Aorta (tissue), 5 donors: ENCODE measurements at regions of chr10 and their contacts with region 1.

Region 1: GRCh38 chr10:14500172-14500765 is 169.5 kb upstream of the FRMD4A start:
- DNase-seq: no peak
- ATAC-seq: no peak
- H3K4me3 ChIP-seq: no peak overlapping the region
- H3K27ac ChIP-seq: no peak overlapping the region
- H3K4me1 ChIP-seq: no peaks in the 10 kb centered on the region
- H3K27me3 ChIP-seq: no peaks in the 10 kb centered on the region

Region 2: GRCh38 chr10:14200698-14201544 is 299.3 kb before region 1 on chr10:
- intact Hi-C with region 1: no loop called
- DNase-seq: no peak
- ATAC-seq: no peak
- H3K4me3 ChIP-seq: no peak overlapping the region
- H3K27ac ChIP-seq: no peak overlapping the region
- H3K4me1 ChIP-seq: no peaks in the 10 kb centered on the region
- H3K27me3 ChIP-seq: no peaks in the 10 kb centered on the region

Region 3: DNA sequence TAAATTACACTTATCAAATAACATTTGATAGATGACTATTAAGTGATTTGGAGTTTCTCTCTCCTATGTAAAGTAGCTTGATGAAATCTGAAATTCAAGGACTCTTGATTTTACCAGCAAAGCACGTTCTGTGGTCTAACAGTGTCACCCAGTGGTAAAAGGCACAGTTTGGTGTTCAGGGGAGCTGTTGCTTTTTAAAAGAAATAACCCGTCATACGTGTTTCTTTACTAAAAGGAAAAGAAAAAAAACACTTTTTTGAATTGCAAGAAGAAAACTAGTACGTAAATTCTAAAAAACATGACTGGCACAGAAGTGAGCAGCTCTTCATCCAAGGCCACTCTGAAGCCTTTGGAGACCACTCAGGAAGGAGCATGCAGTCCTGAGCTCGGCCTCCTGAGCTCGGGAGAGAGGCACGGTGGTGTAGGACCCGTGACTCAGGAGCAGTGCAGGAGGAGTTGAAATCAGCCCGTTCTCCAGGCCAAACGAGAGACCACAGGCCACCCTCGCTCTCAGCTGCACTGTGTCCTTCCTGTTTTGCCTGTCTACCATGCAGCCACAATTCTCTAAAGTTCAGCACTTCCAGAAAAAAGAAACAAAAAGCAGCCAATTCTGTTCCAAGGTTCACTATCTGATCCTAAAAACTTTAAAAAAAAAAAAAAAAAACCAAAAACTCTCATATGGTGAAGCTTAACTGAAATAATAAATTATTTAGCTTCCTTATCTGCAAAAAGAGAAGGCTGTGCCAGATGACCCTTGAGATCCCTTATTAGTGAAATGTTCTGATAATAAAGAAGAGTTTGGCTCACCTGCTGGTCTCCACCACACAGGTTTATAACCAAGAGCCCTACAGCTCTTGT is 43.0 kb after region 1 on chr10:
- intact Hi-C with region 1: loop called in 1 of 2 experiments (anchors 5 kb)
- DNase-seq: peak in 1 of 2 donors; percentile 73
- ATAC-seq: peak; percentile 63
- H3K4me3 ChIP-seq: no peak overlapping the region
- H3K27ac ChIP-seq: peak overlapping the region in 1 of 2 donors; percentile 84
- H3K4me1 ChIP-seq: no peaks in the 10 kb centered on the region
- H3K27me3 ChIP-seq: no peaks in the 10 kb centered on the region